GM10248 (cell line): ENCODE measurements at regions of chr9 and their contacts with region 1.

Region 1: DNA sequence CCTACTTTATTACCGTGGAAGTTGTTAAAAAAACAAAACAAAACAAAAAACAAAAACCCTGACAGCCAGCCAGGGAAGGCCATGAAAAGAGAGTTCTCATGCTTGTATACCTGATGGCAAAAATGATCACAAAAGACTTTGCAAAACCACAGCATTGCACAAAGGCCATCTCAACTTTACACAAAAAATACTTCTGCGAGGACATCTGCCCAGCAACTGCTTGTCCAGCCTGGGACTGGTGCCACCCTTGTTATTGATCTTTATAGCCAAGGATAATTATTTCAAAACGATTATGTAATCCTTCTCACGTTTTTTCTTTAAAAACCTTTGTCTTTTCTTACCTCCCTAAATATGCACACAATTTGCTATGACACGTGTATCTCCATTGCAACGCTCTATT is 42.2 kb upstream of the SLC28A3 start:
- DNase-seq: no peak
- CTCF ChIP-seq: no peak

Region 2: GRCh38 chr9:84397151-84397728 is 14.5 kb after region 1 on chr9:
- CTCF ChIA-PET with region 1: interaction called, 40 read pairs
- POLR2A ChIA-PET with region 1: no interaction called
- DNase-seq: peak; percentile 76
- CTCF ChIP-seq: peak; percentile 91